Activated CD4-positive, alpha-beta T cell treated with anti-CD3 and anti-CD28 coated beads for 36 hours (primary cell): ENCODE measurements at regions of chr3 and their contacts with region 1.

Region 1: GRCh38 chr3:190701096-190701532 is 161.4 kb downstream of the GMNC start:
- DNase-seq: peak; percentile 37
- ATAC-seq: peak; percentile 36
- H3K4me3 Mint-ChIP-seq: no peak overlapping the region
- H3K27ac Mint-ChIP-seq: no peak overlapping the region
- H3K4me1 Mint-ChIP-seq: no peaks in the 10 kb centered on the region
- H3K27me3 Mint-ChIP-seq: peaks cover 25% of the 10 kb centered on the region

Region 2: GRCh38 chr3:189961525-189962161 is 739.5 kb before region 1 on chr3:
- CTCF ChIA-PET with region 1: no interaction called
- POLR2A ChIA-PET with region 1: no interaction called
- intact Hi-C with region 1: loop called (anchors 2 to 10 kb)
- DNase-seq: peak; percentile 85
- ATAC-seq: peak; percentile 78
- H3K4me3 Mint-ChIP-seq: no peak overlapping the region
- H3K27ac Mint-ChIP-seq: no peak overlapping the region
- H3K4me1 Mint-ChIP-seq: peaks cover 8% of the 10 kb centered on the region
- H3K27me3 Mint-ChIP-seq: peaks cover 7% of the 10 kb centered on the region

Region 3: GRCh38 chr3:190224863-190225692 is 476.0 kb before region 1 on chr3:
- CTCF ChIA-PET with region 1: interaction called, 3 read pairs
- POLR2A ChIA-PET with region 1: no interaction called
- intact Hi-C with region 1: loop called in 1 of 2 experiments (anchors 10 kb)
- DNase-seq: no peak
- ATAC-seq: no peak
- H3K4me3 Mint-ChIP-seq: no peak overlapping the region
- H3K27ac Mint-ChIP-seq: no peak overlapping the region
- H3K4me1 Mint-ChIP-seq: peaks cover 3% of the 10 kb centered on the region
- H3K27me3 Mint-ChIP-seq: peaks cover 4% of the 10 kb centered on the region

Region 4: DNA sequence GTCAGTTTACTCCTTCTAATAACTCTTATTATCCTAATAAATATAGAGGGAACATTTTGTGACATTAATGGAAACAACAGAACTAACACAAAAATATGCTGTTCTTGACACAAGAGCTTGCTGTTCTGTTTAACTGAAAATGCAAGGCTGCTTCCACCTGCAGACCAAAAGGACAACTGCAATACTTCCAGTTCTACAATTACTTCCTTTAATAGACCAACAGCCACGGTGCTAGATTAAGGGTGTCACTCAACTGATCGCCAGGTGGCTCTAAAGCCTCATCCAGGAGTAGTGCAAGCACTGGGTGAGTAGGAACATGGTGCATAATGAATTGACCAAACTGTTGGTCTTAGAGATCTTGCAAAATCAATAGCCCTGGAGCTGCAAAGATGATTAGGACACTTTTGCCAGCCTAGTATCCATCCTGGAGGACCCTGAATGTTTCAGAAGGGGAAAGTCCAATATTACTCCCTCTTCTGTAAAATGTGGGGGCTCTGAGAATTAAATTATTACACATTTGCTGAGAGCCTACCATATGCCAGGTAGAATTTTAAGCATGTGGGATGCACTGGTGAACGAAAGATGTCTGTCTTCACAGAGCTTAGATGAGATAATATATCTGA is 316.8 kb before region 1 on chr3:
- CTCF ChIA-PET with region 1: interaction called, 6 read pairs
- POLR2A ChIA-PET with region 1: no interaction called
- intact Hi-C with region 1: loop called in 1 of 2 experiments (anchors 10 kb)
- DNase-seq: peak; percentile 40
- ATAC-seq: peak; percentile 57
- H3K4me3 Mint-ChIP-seq: no peak overlapping the region
- H3K27ac Mint-ChIP-seq: no peak overlapping the region
- H3K4me1 Mint-ChIP-seq: peaks cover 13% of the 10 kb centered on the region
- H3K27me3 Mint-ChIP-seq: peaks cover 17% of the 10 kb centered on the region

Region 5: GRCh38 chr3:190655933-190656332 is 45.2 kb before region 1 on chr3:
- CTCF ChIA-PET with region 1: no interaction called
- POLR2A ChIA-PET with region 1: no interaction called
- intact Hi-C with region 1: no loop called
- DNase-seq: no peak
- ATAC-seq: no peak
- H3K4me3 Mint-ChIP-seq: no peak overlapping the region
- H3K27ac Mint-ChIP-seq: no peak overlapping the region
- H3K4me1 Mint-ChIP-seq: no peaks in the 10 kb centered on the region
- H3K27me3 Mint-ChIP-seq: peaks cover 20% of the 10 kb centered on the region

Region 6: GRCh38 chr3:190676481-190676880 is 24.6 kb before region 1 on chr3:
- CTCF ChIA-PET with region 1: no interaction called
- POLR2A ChIA-PET with region 1: no interaction called
- intact Hi-C with region 1: no loop called
- DNase-seq: no peak
- ATAC-seq: no peak
- H3K4me3 Mint-ChIP-seq: no peak overlapping the region
- H3K27ac Mint-ChIP-seq: no peak overlapping the region
- H3K4me1 Mint-ChIP-seq: no peaks in the 10 kb centered on the region
- H3K27me3 Mint-ChIP-seq: peaks cover 6% of the 10 kb centered on the region

Region 7: DNA sequence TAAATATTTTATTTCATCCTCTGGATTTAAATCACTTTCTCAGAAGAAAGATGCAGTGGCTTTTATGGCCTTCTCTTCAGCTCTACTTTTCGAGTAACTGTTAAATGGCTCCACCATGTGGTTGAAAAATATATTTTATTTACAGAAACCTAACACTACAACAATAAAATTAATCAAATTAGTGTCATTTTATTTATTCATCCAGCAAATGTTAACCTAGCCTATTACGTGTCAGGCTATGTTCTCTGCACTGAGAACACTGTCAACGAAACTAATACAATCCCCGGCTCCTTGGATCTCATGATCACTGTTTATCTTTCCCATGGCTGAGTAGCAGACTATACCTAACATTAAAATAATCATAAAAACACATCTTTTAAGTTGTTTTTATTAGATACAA is 349.9 kb after region 1 on chr3:
- CTCF ChIA-PET with region 1: interaction called, 4 read pairs
- POLR2A ChIA-PET with region 1: no interaction called
- intact Hi-C with region 1: loop called in 1 of 2 experiments (anchors 1 kb)
- DNase-seq: no peak
- ATAC-seq: no peak
- H3K4me3 Mint-ChIP-seq: no peak overlapping the region
- H3K27ac Mint-ChIP-seq: no peak overlapping the region
- H3K4me1 Mint-ChIP-seq: no peaks in the 10 kb centered on the region
- H3K27me3 Mint-ChIP-seq: peaks cover 2% of the 10 kb centered on the region